ENCODE measurements at regions of chr19 and their contacts with region 1.

Region 1: GRCh38 chr19:33373701-33374421 is at the start of gene CEBPG:
- DNase-seq: no peak
- total RNA-seq, gene CEBPG: 29.1 to 41.3 TPM

Region 2: DNA sequence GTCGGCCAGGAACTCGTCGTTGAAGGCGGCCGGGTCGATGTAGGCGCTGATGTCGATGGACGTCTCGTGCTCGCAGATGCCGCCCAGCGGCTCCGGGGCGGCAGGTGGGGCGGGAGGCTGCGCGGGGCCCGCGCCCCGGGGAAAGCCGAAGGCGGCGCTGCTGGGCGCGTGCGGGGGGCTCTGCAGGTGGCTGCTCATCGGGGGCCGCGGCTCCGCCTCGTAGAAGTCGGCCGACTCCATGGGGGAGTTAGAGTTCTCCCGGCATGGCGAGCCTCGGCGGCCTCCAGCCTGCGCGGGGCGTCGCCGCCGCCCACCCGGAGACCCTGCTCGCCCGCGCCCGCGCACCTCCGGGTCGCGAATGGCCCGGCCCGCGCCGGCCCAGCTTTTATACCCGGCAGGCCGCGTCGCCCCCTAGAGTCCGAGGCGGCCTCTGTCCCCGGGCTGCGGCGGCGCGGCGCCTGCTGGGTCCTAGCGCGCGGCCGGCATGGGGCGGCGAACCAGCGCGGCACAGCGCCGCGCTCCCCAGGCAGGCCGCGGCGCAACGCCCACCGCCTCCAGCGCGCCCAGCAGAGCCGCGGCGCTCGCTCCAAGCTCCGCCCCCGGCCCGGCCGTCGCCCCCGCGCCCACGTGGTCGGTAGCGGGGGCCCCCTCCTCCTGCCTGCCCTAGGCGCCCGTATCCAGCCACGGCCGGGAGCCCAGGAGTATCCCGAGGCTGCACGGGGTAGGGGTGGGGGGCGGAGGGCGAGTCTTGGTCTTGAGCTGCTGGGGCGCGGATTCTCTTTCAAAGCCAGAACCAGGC is 71.5 kb before region 1 on chr19 and contains the start of gene CEBPA:
- intact Hi-C with region 1: loop called in 1 of 2 experiments (anchors 5 kb)
- DNase-seq: peak; percentile 94
- total RNA-seq, gene CEBPA: 6.3 to 8.0 TPM

Region 3: DNA sequence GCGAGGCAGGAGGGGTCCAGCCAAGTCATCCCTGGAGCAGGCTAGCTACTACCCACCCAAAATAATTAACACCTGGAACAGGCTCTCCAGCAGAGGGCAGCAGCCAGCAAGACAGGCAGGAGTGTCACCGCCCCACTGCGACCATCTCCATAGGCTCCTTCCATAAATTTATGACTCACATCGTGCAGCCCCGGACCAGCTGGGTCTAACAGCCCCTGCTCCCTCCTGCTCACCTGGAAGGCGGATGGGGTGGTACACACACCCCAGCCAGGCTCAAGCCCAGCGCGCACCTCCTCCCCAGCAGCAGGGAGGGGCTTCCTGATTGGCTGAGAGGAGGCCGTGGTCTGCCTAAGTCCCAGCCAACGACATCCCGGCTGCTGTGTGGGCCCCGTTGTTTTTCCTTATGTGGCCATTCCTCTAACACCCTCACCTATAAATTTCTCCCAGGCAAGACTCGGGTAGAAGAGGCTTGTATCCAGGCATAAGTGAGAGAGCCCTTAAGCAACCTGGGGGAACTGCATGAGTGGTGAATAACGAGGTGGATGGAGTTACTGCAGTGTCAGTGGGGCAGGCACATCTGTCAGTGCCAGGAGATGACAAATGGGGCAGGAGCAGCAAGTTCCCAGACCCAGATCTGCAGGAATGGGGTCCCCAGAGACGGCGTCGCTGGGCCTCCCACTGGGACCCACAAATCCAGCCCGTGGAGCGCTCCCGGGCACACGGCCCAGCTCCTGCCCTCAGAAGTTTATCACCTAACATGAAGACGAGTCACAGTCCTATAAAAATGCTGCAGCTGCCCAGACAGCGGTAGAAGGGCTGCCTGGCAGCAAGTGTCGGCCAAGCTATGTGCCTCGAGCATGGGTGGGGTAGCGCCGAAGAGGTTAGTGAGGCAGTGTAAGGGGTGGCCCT is 42.7 kb after region 1 on chr19:
- intact Hi-C with region 1: no loop called
- DNase-seq: no peak

Region 4: GRCh38 chr19:34577531-34578107 is 1203.8 kb after region 1 on chr19:
- intact Hi-C with region 1: loop called in 1 of 2 experiments (anchors 5 kb)
- DNase-seq: peak; percentile 79